H1 (cell line): ENCODE measurements at regions of chr10 and their contacts with region 1.

Region 1: DNA sequence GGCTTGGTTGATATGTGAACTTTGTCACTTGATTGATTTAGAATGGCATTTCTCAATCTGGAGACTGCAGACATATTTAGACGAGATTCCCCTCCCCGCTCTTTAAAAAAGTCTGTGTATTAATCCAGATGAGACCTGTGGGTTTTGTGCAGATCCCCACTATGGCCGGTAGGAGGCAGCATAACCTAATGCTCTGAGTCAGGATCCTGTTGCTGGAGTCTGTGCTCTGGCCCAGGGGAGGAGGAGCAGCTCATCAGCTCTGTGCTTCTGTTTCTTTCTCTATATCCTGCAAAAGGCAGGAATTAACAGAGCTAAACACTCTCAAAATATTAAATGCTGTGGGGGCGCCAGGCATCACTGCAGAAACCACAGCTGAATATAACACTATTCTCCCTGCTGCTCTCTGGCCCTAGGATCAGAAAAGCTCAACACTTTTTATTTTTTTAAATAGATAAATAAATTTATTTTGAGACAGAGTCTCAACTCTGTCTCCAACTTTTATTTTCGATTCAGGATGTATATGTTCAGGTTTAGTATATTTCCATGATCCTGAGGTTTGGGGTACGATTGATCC is 23.9 kb upstream of the SEPHS1 start:
- DNase-seq: peak; percentile 57 to 72
- H3K4me3 ChIP-seq: no peak overlapping the region
- H3K27ac ChIP-seq: no peak overlapping the region
- H3K4me1 ChIP-seq: no peaks in the 10 kb centered on the region
- H3K27me3 ChIP-seq: no peaks in the 10 kb centered on the region
- CTCF ChIP-seq: peak; percentile 68 to 96 (median 91)
- EP300 ChIP-seq: no peak
- POLR2A ChIP-seq: no peak
- RAD21 ChIP-seq: peak; percentile 99 to 100

Region 2: GRCh38 chr10:13092291-13093102 is 279.5 kb before region 1 on chr10:
- CTCF ChIA-PET with region 1: no interaction called
- POLR2A ChIA-PET with region 1: no interaction called
- DNase-seq: no peak
- H3K4me3 ChIP-seq: no peak overlapping the region
- H3K27ac ChIP-seq: no peak overlapping the region
- H3K4me1 ChIP-seq: no peaks in the 10 kb centered on the region
- H3K27me3 ChIP-seq: no peaks in the 10 kb centered on the region
- CTCF ChIP-seq: no peak
- EP300 ChIP-seq: no peak
- POLR2A ChIP-seq: no peak
- RAD21 ChIP-seq: no peak

Region 3: GRCh38 chr10:13335881-13336280 is 36.1 kb before region 1 on chr10:
- CTCF ChIA-PET with region 1: no interaction called
- POLR2A ChIA-PET with region 1: no interaction called
- DNase-seq: no peak
- H3K4me3 ChIP-seq: no peak overlapping the region
- H3K27ac ChIP-seq: no peak overlapping the region
- H3K4me1 ChIP-seq: peaks cover 0 to 3% (median 1%) of the 10 kb centered on the region in 4 experiments; a peak in 3 of 7 replicates
- H3K27me3 ChIP-seq: no peaks in the 10 kb centered on the region
- CTCF ChIP-seq: no peak
- EP300 ChIP-seq: no peak
- POLR2A ChIP-seq: no peak
- RAD21 ChIP-seq: no peak

Region 4: GRCh38 chr10:13390604-13391522 is 18.9 kb after region 1 on chr10:
- CTCF ChIA-PET with region 1: interaction called, 29 read pairs
- POLR2A ChIA-PET with region 1: interaction called, 5 read pairs
- DNase-seq: no peak
- H3K4me3 ChIP-seq: no peak overlapping the region
- H3K27ac ChIP-seq: no peak overlapping the region
- H3K4me1 ChIP-seq: peaks cover 1 to 15% (median 11%) of the 10 kb centered on the region in 4 experiments; a peak in 5 of 7 replicates
- H3K27me3 ChIP-seq: no peaks in the 10 kb centered on the region
- CTCF ChIP-seq: no peak
- EP300 ChIP-seq: no peak
- POLR2A ChIP-seq: no peak
- RAD21 ChIP-seq: no peak

Region 5: GRCh38 chr10:13404305-13404759 is 32.3 kb after region 1 on chr10:
- CTCF ChIA-PET with region 1: interaction called, 58 read pairs
- POLR2A ChIA-PET with region 1: no interaction called
- DNase-seq: no peak
- H3K4me3 ChIP-seq: no peak overlapping the region
- H3K27ac ChIP-seq: no peak overlapping the region
- H3K4me1 ChIP-seq: peaks cover 0 to 7% (median under 1%) of the 10 kb centered on the region in 4 experiments; a peak in 3 of 7 replicates
- H3K27me3 ChIP-seq: no peaks in the 10 kb centered on the region
- CTCF ChIP-seq: no peak
- EP300 ChIP-seq: no peak
- POLR2A ChIP-seq: no peak
- RAD21 ChIP-seq: no peak

Region 6: DNA sequence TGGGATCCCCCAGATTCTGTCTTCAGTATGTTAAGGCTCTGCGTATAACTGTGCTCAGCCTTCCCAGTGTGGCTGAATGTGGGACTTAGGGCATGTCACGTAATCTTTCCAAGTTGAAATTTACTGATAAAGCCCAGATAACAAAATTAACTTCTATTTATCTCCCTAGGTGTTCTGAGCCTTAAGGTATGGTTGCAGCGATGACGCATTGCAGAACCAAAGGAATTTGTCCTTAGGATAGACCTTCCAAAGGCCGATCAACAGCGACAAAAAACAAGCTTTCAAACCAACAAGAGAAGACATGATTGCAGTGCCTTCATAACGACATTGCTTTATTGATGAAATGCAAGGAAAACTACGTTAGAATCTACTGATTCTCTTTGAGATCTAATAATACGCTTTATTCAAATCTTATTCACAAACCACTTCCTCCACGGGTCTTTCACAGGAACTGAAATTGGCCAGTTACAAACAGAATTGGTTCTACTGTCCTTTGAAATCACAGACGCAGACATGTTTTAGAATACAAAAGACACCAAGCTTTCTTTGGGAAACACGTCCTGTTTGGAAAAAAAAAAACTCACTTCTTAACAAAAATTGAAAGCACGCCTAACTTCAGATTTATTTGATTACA is 50.7 kb after region 1 on chr10:
- CTCF ChIA-PET with region 1: interaction called, 10 read pairs
- POLR2A ChIA-PET with region 1: no interaction called
- DNase-seq: no peak
- H3K4me3 ChIP-seq: no peak overlapping the region
- H3K27ac ChIP-seq: no peak overlapping the region
- H3K4me1 ChIP-seq: no peaks in the 10 kb centered on the region
- H3K27me3 ChIP-seq: no peaks in the 10 kb centered on the region
- CTCF ChIP-seq: no peak
- EP300 ChIP-seq: no peak
- POLR2A ChIP-seq: no peak
- RAD21 ChIP-seq: no peak

Region 7: DNA sequence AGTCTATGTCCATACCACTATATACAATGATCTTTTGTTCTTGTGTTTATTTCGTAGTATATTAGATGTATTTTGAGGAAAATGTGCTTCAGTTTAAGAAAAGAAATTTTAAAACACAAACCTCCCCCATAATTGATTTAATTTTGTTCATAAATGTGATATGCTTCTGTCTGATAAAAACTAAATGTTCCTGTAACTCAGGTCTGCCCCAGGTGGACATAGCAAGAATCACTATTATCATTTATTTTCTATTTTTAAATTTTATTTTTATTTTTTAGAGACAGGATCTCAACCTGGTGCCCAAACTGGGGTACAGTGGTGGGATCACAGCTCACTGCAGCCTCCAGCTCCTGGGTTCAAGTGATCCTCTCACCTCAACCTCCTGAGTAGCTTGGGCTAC is 113.6 kb after region 1 on chr10:
- CTCF ChIA-PET with region 1: interaction called, 11 read pairs
- POLR2A ChIA-PET with region 1: no interaction called
- DNase-seq: no peak
- H3K4me3 ChIP-seq: no peak overlapping the region
- H3K27ac ChIP-seq: no peak overlapping the region
- H3K4me1 ChIP-seq: peaks cover 0 to 6% (median 2%) of the 10 kb centered on the region in 4 experiments; a peak in 3 of 7 replicates
- H3K27me3 ChIP-seq: peaks cover 0 to 1% (median 0%) of the 10 kb centered on the region in 4 experiments; a peak in 1 of 7 replicates
- CTCF ChIP-seq: no peak
- EP300 ChIP-seq: no peak
- POLR2A ChIP-seq: no peak
- RAD21 ChIP-seq: no peak

Region 8: GRCh38 chr10:13536674-13537366 is 164.8 kb after region 1 on chr10:
- CTCF ChIA-PET with region 1: interaction called, 56 read pairs
- POLR2A ChIA-PET with region 1: no interaction called
- DNase-seq: peak; percentile 66 to 86
- H3K4me3 ChIP-seq: peak overlapping the region in 1 of 4 experiments; percentile 25; a peak in 3 of 8 replicates
- H3K27ac ChIP-seq: no peak overlapping the region
- H3K4me1 ChIP-seq: no peaks in the 10 kb centered on the region; a peak in 1 of 7 replicates
- H3K27me3 ChIP-seq: no peaks in the 10 kb centered on the region
- CTCF ChIP-seq: peak; percentile 80 to 94 (median 91)
- EP300 ChIP-seq: no peak
- POLR2A ChIP-seq: no peak
- RAD21 ChIP-seq: peak; percentile 85 to 89